GM10248 (cell line): ENCODE measurements at regions of chr1 and their contacts with region 1.

Region 1: DNA sequence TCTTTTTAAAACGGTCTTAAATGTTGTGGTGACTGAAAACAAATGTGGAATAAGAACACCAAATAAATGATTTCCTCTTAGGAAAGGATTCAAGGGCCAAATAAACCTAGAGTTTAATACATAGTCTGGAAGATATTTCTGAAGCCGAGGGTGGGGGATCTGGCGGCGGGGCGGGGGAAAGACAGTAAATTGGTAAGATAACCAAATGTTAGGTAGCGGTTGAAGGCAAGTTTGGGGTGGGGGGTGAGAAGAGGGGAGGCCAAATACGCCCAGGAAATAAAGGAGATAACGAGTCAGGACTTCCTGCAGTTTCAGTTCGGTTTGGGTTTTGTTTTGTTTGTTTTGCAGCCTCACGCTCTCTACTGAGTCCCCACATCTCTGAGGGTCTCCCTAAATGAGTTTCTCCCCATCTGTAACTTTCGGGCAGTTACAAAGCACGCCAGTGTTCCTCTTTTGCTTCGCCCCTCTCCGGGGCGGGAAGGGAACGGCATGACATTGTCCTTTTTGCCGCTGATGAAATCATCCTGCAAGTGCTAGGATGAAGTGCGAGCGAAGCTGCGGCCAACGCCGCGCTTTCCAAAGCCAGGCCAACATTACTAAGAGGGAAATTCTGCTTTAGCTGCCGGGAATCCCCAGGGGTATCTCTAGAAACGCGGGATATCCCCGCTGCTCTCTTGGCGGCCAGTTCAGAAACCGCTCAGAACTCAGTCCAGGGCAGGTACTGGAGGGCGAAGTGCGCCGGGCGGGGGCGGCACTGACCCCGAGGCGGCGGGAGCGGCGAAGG is 844 bp downstream of the NIBAN1 start:
- DNase-seq: peak; percentile 70
- CTCF ChIP-seq: no peak

Region 2: GRCh38 chr1:184932319-184932718 is 41.1 kb before region 1 on chr1:
- CTCF ChIA-PET with region 1: no interaction called
- POLR2A ChIA-PET with region 1: no interaction called
- DNase-seq: no peak
- CTCF ChIP-seq: no peak

Region 3: GRCh38 chr1:184958554-184959353 is 14.7 kb before region 1 on chr1:
- CTCF ChIA-PET with region 1: interaction called, 17 read pairs
- POLR2A ChIA-PET with region 1: no interaction called
- DNase-seq: no peak
- CTCF ChIP-seq: no peak

Region 4: DNA sequence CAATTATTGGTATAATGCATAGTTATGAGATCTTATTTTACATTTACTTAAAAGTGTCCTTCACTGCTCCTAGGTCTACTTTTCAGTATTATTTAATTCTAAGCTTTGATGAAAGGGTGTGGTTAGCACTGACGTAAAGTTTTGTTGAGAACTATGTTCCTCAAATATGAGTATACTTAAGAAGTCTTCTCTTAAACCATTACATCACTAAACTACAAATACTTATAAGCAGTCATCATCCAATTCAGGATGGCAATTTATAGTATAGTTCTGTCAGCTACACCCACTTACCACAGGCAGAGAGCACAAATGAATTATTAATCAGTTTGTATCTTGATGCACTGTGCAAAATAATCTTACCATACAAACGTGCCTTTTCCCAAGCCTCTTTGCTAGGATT is 156.2 kb after region 1 on chr1:
- CTCF ChIA-PET with region 1: no interaction called
- POLR2A ChIA-PET with region 1: no interaction called
- DNase-seq: no peak
- CTCF ChIP-seq: no peak